Activated B cell treated with CpG ODN at 0.5 μM for 24 hours (primary cell): ENCODE measurements at regions of chr19 and their contacts with region 1.

Region 1: DNA sequence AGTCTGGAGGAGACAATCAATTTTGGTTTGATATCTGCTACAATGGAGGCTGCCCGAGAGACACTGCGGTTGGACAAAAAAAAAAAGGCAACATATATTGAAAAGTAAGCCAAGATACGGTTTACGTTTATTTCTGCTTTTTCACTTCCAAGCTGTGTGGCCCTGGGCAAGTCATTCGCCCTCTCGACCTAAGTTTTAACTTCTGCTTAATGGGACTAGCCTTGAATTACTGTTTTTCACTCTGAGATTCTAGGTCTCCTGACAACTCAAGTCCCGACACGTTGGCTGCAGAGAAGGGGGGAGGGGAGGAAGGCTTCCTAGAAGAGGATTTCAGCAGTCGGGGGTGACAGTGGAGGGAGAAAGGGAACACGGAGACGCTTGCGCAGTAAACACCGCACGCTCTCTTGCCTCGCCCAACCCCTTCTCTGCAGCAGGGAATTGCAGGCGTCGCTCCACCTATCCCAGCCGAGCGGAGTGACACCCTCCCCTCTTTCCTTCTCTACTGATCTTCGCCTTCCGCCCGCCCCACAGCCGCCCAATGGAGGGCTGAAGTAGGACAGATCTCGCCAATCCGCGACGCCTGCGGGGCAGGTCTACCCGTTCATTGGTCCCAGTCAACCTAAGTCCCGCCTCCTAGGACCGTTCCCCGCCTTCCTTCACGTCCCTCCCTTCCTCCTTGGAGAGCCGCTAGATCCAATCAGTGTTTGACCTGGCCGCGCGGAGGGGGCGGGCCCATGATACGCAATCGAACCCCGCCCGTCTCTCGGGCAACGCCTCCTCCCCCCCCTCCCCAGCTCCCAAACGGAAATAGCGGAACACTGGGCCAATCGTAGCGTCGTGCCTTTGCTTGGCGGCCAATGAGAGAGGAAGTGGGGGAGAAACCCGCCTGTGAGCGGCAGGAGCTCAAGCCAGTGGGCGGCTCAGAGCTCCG is 529 bp upstream of the AP2A1 start:
- DNase-seq: peak; percentile 93
- ATAC-seq: peak; percentile 87
- H3K4me3 Mint-ChIP-seq: peak overlapping the region; percentile 88
- H3K27ac Mint-ChIP-seq: peak overlapping the region; percentile 96
- H3K4me1 Mint-ChIP-seq: peaks cover 33% of the 10 kb centered on the region
- H3K27me3 Mint-ChIP-seq: no peaks in the 10 kb centered on the region
- CTCF ChIP-seq: no peak

Region 2: GRCh38 chr19:49590071-49590970 is 176.0 kb before region 1 on chr19:
- CTCF ChIA-PET with region 1: no interaction called
- POLR2A ChIA-PET with region 1: interaction called, 3 read pairs
- intact Hi-C with region 1: loop called (anchors 2 kb)
- DNase-seq: peak; percentile 96
- ATAC-seq: peak; percentile 81
- H3K4me3 Mint-ChIP-seq: peak overlapping the region; percentile 85
- H3K27ac Mint-ChIP-seq: peak overlapping the region; percentile 89
- H3K4me1 Mint-ChIP-seq: peaks cover 34% of the 10 kb centered on the region
- H3K27me3 Mint-ChIP-seq: no peaks in the 10 kb centered on the region
- CTCF ChIP-seq: no peak

Region 3: DNA sequence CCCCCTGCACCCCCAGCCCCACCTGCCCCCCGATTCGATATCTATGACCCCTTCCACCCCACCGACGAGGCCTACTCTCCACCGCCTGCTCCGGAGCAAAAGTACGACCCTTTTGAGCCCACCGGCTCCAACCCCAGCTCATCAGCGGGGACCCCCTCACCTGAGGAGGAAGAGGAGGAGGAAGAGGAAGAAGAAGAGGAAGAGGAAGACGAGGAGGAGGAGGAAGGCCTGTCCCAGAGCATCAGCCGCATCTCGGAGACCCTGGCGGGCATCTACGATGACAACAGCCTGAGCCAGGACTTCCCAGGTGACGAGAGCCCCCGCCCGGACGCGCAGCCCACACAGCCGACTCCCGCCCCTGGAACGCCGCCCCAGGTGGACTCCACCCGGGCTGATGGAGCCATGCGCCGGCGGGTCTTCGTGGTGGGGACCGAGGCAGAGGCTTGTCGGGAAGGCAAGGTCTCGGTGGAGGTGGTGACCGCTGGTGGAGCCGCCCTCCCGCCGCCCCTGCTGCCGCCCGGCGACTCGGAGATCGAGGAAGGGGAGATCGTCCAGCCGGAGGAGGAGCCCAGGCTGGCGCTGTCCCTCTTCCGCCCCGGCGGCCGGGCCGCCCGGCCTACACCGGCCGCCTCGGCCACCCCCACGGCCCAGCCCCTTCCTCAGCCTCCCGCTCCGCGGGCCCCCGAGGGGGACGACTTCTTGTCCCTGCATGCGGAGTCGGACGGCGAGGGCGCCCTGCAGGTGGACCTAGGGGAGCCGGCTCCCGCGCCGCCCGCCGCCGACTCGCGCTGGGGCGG is 115.0 kb before region 1 on chr19:
- CTCF ChIA-PET with region 1: no interaction called
- POLR2A ChIA-PET with region 1: no interaction called
- intact Hi-C with region 1: no loop called
- DNase-seq: no peak
- ATAC-seq: no peak
- H3K4me3 Mint-ChIP-seq: no peak overlapping the region
- H3K27ac Mint-ChIP-seq: no peak overlapping the region
- H3K4me1 Mint-ChIP-seq: peaks cover 1% of the 10 kb centered on the region
- H3K27me3 Mint-ChIP-seq: no peaks in the 10 kb centered on the region
- CTCF ChIP-seq: no peak

Region 4: DNA sequence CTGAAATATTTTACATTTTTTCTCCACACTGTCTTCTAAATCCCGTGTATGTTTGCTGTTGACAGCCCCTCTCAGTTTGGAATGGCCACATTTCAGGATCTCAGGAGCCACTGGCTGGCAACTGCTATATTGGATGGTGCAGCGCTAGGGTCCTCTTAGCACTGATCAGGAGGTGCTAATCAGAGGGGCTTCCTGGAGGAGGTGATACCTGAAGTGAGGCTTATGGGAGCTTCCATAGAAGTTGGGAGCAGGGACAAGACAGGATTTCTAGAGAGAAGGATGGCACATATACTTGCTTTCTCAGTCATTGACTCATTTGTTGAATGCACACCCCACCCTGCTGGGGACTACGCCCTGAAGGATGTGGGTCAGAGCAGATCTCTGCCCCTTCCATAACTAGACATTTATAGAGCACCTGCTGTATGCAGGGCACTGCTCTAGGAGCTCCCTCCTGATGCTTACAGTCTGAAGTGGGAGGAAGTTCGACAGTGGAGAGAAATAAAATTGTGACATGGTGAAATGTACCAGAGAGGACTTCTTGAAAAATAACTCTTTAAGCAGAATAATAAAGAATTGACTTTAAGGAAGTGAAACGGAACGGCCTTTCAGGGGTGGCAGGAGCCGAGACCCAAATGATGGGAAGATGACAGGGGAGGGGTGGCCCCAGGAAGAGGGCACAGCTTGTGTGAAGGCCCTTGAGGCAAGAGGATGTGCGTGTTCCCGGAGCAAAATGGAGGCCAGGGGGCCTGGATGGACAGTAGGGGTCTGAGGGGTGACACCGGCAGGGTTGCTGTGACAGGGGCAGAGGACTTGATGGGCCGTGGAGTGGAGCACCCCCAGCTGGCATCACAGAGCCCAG is 13.7 kb after region 1 on chr19:
- CTCF ChIA-PET with region 1: no interaction called
- POLR2A ChIA-PET with region 1: interaction called, 5 read pairs
- intact Hi-C with region 1: loop called (anchors 2 kb)
- DNase-seq: no peak
- ATAC-seq: peak; percentile 84
- H3K4me3 Mint-ChIP-seq: peak overlapping the region; percentile 58
- H3K27ac Mint-ChIP-seq: peak overlapping the region; percentile 88
- H3K4me1 Mint-ChIP-seq: peaks cover 28% of the 10 kb centered on the region
- H3K27me3 Mint-ChIP-seq: no peaks in the 10 kb centered on the region
- CTCF ChIP-seq: no peak

Region 5: DNA sequence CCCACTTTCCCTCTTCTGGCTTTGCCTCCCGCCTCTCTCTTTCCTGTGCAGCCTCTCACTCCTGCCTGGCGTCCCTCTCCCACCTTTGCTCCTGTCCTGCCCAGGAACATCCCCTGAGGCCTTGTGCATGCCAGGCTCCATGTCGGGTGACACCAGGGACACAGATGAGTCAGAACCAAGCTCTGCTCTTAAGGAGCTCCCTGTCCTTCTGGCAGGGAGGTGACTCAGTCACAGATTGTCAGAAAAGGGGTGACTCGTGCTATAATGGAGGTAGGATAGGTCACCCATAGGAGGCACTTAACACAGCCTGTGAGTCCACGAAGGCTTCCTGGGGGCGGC is 27.1 kb after region 1 on chr19:
- CTCF ChIA-PET with region 1: no interaction called
- POLR2A ChIA-PET with region 1: no interaction called
- intact Hi-C with region 1: no loop called
- DNase-seq: no peak
- ATAC-seq: no peak
- H3K4me3 Mint-ChIP-seq: no peak overlapping the region
- H3K27ac Mint-ChIP-seq: no peak overlapping the region
- H3K4me1 Mint-ChIP-seq: peaks cover 3% of the 10 kb centered on the region
- H3K27me3 Mint-ChIP-seq: no peaks in the 10 kb centered on the region
- CTCF ChIP-seq: no peak

Region 6: GRCh38 chr19:49817964-49818648 is 51.8 kb after region 1 on chr19 and contains the start of gene MED25:
- CTCF ChIA-PET with region 1: no interaction called
- POLR2A ChIA-PET with region 1: interaction called, 15 read pairs
- intact Hi-C with region 1: loop called (anchors 1 kb)
- DNase-seq: peak; percentile 91
- ATAC-seq: peak; percentile 59
- H3K4me3 Mint-ChIP-seq: peak within 1 kb of the TSS; percentile 98
- H3K27ac Mint-ChIP-seq: peak within 1 kb of the TSS; percentile 99
- H3K4me1 Mint-ChIP-seq: peaks cover 40% of the 10 kb centered on the region
- H3K27me3 Mint-ChIP-seq: no peaks in the 10 kb centered on the region
- CTCF ChIP-seq: no peak
- total RNA-seq, gene MED25: 70.1 and 88.8 TPM in 2 replicates

Region 7: DNA sequence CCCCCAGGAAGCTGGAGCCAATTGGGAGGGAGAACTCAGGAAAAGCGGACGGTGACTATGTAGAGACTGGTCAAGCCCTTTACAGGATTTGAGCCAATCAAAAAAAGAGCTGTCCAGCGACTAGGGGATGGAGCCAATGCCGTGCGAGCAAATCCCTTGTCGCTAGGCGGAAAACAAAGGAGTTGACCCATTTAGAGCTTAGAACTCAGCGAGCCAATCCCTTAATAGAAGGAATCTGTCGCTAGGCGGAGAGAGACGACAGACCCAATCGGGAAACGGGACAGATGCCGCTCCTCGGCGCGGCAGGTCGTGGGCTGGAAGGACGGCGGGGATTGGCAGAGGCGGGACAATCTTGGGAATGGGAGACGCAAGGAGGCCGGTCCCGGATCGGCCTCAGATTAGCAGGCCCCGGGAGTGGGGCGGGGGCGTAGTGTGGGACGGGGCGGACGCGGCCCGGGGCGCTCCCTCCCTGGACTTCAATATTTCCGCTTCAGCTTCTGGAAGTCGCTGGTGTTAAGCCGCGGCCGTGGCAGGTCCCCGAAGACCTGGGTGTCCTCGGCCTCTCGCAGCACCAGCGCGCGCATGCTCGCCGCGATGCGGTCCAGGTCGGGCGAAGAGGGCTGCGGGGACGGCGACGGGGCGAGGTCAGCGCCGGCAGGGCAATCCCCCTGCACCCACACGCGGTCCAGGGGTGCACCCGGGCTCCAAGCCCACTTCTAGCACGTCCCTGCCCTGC is 103.3 kb after region 1 on chr19:
- CTCF ChIA-PET with region 1: no interaction called
- POLR2A ChIA-PET with region 1: interaction called, 19 read pairs
- intact Hi-C with region 1: loop called (anchors 1 kb)
- DNase-seq: peak; percentile 82
- ATAC-seq: peak; percentile 80
- H3K4me3 Mint-ChIP-seq: no peak overlapping the region
- H3K27ac Mint-ChIP-seq: no peak overlapping the region
- H3K4me1 Mint-ChIP-seq: peaks cover 39% of the 10 kb centered on the region
- H3K27me3 Mint-ChIP-seq: no peaks in the 10 kb centered on the region
- CTCF ChIP-seq: no peak

Region 8: DNA sequence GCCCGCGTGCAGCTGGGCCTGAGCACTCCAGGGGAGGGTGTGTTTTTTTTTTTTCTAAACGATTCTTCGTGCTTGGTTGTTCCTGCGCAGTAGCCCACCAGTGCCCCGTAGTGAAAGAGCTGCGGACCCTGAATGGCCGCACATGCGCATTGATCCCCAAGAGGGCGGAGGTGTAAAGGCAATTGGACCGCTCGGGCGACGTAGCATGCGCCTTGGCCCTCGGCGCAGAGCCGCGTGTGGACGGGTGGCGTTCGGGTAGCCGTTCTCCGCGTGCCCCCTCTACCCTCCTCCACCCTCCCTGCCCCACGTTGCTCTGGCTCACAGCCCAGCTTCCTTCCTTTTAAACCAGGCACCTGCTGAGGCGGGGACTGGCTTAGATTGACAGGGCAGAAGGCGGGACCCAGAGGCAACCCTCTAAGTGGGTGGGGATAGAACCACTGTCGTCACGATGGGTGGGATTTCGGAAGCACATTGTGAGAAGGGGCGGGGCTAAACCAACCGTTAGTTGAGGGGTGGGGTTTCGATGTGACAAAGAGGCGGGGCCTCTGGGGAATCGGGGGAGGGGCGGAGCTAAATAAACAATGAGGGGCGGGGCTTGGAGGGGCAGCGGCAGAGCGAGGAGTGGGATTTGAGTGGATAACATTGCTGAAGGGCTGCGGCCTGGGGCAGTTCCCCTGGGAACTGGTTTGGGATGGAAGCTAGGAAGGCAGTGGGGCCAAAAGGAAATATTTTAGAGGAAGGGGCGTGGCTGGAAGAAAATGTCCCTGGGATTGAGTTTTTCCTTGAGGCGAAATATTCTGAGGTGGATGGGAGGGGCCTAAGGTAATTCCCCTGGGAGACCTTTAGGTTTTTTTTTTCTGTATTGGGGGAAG is 163.6 kb after region 1 on chr19:
- CTCF ChIA-PET with region 1: no interaction called
- POLR2A ChIA-PET with region 1: interaction called, 12 read pairs
- intact Hi-C with region 1: loop called (anchors 1 kb)
- DNase-seq: peak; percentile 84
- ATAC-seq: peak; percentile 83
- H3K4me3 Mint-ChIP-seq: peak overlapping the region; percentile 92
- H3K27ac Mint-ChIP-seq: peak overlapping the region; percentile 89
- H3K4me1 Mint-ChIP-seq: peaks cover 48% of the 10 kb centered on the region
- H3K27me3 Mint-ChIP-seq: no peaks in the 10 kb centered on the region
- CTCF ChIP-seq: no peak